HEK293T (cell line): ENCODE measurements at regions of chr6 and their contacts with region 1.

Region 1: DNA sequence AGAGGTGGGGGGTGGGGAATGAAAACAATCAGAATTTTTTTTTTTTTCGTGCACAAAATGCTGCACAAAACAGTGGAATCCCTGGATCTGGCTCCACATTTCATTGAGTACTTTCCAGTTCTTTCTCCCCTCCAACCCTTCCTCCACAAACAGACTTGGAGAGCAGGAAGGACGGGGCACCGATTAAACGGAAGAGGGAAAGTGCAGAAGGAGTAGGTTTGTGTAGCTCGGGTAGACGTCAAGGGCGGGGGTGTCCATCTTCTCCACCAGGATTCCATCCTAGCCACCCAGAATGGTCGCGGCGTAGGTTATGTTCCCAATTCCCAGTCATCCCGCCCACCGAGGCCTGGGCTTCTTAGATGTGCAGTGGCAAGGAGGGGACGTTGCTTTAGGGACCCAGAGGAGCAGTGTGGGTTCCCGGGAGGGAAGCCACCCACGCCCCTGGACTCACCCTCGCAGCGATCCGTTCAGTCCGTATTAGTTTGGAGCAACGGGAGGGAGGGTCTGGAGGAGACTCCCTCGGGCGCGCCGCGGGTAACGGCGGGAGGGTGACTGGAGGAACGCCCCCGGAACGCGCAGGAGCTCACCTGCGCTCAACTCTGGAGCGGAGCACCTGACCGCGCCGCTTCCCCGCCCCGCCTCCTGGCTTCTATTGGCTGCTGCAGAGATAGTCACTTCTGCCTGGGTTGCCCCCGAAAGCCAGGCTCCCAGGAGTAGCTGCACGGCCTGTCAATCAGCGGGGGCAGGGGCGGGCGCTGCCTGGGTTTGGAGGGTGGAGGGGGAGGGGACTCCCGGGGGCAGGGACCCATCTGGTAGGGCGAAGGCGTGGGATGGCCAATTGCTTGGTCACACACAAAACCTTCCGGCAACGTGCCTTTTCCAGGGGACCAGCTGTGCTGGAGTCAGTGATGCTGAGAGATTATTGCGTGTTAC is at the start of gene ENPP5:
- DNase-seq: peak; percentile 89

Region 2: GRCh38 chr6:46129629-46130511 is 40.8 kb before region 1 on chr6 and contains the start of gene ENPP4:
- CTCF ChIA-PET with region 1: no interaction called
- POLR2A ChIA-PET with region 1: interaction called, 10 read pairs
- DNase-seq: peak; percentile 97